ENCODE measurements at regions of chr4 and their contacts with region 1.

Region 1: DNA sequence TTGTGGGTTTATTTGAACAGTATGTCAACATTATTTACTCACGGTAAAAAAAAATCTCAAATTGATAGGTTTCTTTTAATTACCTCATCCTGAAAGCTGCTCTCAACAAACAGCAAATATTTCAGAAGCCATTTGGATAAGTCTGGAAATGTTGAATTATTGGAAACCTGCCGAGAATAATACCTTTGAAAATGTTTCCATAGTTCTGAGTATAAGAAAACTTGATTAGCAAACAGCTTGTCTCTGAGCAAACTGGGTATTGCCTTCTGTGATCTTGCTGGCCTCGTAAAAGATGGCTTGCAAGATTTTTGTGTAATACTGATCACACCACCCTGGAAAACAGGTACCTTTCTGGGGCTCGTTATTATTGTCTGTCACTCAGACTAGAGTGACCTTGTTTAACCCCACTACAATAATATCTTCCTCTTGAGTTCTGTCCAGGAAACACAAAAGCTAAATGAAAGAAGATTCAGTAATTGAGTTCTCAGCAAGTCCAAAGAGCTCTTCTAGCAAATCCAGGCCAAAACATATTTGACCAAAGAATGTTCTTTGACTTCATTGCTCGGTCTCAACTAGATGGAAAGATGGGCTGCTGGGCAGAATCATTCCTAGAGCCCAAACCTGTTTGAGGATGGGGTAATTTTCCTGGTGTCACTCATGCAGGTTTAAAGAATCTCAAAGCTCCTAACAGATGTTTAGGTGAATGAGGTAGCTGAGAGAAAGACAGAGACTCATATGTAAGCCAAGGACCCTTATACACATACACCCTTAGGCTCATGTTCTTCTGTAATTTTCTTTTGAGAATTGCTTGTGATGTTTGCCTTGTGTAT is 255.6 kb upstream of the JADE1 start:
- DNase-seq: no peak
- H3K4me3 ChIP-seq: peak overlapping the region; percentile 45 to 58 (median 56)
- H3K27ac ChIP-seq: peak overlapping the region; percentile 91 to 92 (median 92)
- H3K4me1 ChIP-seq: peaks cover 0 to 30% (median 21%) of the 10 kb centered on the region in 4 donors
- H3K27me3 ChIP-seq: no peaks in the 10 kb centered on the region
- CTCF ChIP-seq: no peak
- EP300 ChIP-seq: no peak
- POLR2A ChIP-seq: no peak

Region 2: GRCh38 chr4:128191115-128191781 is 362.7 kb before region 1 on chr4:
- intact Hi-C with region 1: loop called (anchors 5 kb)
- DNase-seq: peak; percentile 77
- H3K4me3 ChIP-seq: no peak overlapping the region
- H3K27ac ChIP-seq: no peak overlapping the region
- H3K4me1 ChIP-seq: peaks cover 0 to 9% (median 2%) of the 10 kb centered on the region in 4 donors
- H3K27me3 ChIP-seq: no peaks in the 10 kb centered on the region
- CTCF ChIP-seq: peak; percentile 78 to 86 (median 84)
- EP300 ChIP-seq: no peak
- POLR2A ChIP-seq: no peak

Region 3: DNA sequence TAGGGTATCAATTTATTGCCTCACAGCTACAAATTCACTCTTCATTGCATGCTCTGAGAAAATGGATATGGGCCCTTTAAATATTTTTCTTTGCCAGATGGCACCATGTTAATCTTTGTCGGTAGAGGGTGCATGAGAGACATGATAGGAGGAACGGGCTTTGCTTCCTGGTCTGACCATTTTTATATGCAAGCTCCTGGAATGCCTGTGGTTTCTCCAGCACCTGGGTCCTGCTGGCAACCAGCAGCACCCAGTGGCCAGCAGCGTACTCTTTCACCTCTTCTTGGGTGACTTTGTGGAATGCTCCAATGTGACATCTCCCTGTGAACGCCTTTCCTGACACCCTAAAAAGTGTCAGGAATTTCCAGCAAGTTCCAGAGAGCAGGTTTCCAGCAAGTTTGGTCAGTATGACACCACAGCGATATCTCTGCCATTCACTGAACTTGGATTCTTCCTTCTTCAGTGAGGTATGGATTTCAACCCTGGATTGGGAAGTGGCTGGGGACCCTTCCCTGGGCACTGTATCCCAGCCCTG is 126.0 kb before region 1 on chr4:
- intact Hi-C with region 1: no loop called
- DNase-seq: no peak
- H3K4me3 ChIP-seq: no peak overlapping the region
- H3K27ac ChIP-seq: no peak overlapping the region
- H3K4me1 ChIP-seq: peaks cover 0 to 15% (median 8%) of the 10 kb centered on the region in 4 donors
- H3K27me3 ChIP-seq: no peaks in the 10 kb centered on the region
- CTCF ChIP-seq: peak in 2 of 4 experiments; percentile 19 to 22
- EP300 ChIP-seq: no peak
- POLR2A ChIP-seq: no peak

Region 4: GRCh38 chr4:128658214-128658631 is 104.3 kb after region 1 on chr4:
- intact Hi-C with region 1: loop called (anchors 5 kb)
- DNase-seq: no peak
- H3K4me3 ChIP-seq: no peak overlapping the region
- H3K27ac ChIP-seq: peak overlapping the region; percentile 82 to 85 (median 84)
- H3K4me1 ChIP-seq: peaks cover 0 to 80% (median 70%) of the 10 kb centered on the region in 4 donors
- H3K27me3 ChIP-seq: no peaks in the 10 kb centered on the region
- CTCF ChIP-seq: no peak
- EP300 ChIP-seq: peak in 2 of 4 donors; percentile 17 to 49
- POLR2A ChIP-seq: no peak

Measured in sigmoid colon (tissue), 7 donors.